Sigmoid colon (tissue), 7 donors: ENCODE measurements at regions of chr4 and their contacts with region 1.

Region 1: GRCh38 chr4:127965062-127965802 is at the starts of genes ABHD18 and MFSD8:
- DNase-seq: peak; percentile 100
- H3K4me3 ChIP-seq: peak within 1 kb of the TSS; percentile 77 to 96 (median 82)
- H3K27ac ChIP-seq: peak within 1 kb of the TSS; percentile 91 to 96 (median 95)
- H3K4me1 ChIP-seq: peaks cover 0 to 23% (median 17%) of the 10 kb centered on the region in 4 donors
- H3K27me3 ChIP-seq: no peaks in the 10 kb centered on the region
- CTCF ChIP-seq: peak; percentile 37 to 63 (median 44)
- EP300 ChIP-seq: peak in 1 of 4 donors; percentile 89
- POLR2A ChIP-seq: peak; percentile 46 to 54
- total RNA-seq, gene ABHD18: 6.7 to 15.2 (median 9.0) TPM
- total RNA-seq, gene MFSD8: 26.3 to 54.2 (median 41.8) TPM

Region 2: DNA sequence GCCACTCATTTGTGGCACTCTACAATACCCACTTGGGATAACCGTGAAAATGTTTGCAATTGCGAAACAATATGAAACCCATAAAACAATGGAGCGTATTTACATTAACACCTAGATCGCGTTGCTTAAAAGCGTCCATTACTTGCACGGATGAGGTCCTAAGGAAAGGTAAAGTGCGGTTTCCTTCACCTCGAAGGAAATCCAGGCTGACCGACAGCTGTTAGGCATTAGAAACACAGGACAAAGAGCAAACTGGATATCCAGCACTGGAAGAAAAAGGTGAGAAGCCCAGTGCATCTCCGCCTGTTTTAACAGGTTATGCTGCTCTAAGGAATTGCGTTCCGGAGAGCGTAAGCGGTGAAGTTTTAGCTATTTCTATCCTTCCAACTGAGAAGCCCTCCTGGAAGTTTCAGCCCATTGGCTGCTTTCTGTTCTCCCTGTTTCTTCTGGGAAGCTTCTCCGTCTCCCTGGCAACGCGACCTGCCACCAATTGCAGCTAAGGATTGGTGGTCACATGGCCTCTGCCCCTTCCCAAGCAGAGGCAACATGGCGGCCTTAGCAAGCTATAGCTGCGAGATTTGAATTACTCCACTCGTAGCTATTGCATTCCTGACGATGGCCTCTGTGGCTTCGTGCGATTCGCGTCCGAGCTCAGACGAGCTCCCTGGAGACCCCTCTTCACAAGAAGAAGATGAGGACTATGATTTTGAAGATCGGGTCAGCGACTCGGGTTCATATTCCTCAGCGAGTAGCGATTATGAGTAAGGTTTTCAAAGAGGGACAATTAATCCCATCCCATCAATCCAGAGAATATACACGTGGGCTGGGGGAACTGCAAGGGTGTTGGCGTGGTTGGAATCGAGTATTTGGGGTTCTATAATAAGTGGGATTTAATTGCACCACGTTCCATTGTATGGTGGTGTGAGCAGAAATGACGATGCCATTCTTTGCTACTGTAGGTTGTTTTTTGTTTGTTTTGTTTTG is 332.5 kb before region 1 on chr4 and contains the start of gene INTU:
- intact Hi-C with region 1: loop called (anchors 10 kb)
- DNase-seq: peak; percentile 97
- H3K4me3 ChIP-seq: peak within 1 kb of the TSS; percentile 52 to 68 (median 66)
- H3K27ac ChIP-seq: peak within 1 kb of the TSS; percentile 58 to 74 (median 72)
- H3K4me1 ChIP-seq: peaks cover 0 to 16% (median 8%) of the 10 kb centered on the region in 4 donors
- H3K27me3 ChIP-seq: peaks cover 0 to 4% (median 0%) of the 10 kb centered on the region in 3 donors
- CTCF ChIP-seq: no peak
- EP300 ChIP-seq: no peak
- POLR2A ChIP-seq: no peak
- total RNA-seq, gene INTU: 7.6 to 10.0 (median 9.5) TPM

Region 3: DNA sequence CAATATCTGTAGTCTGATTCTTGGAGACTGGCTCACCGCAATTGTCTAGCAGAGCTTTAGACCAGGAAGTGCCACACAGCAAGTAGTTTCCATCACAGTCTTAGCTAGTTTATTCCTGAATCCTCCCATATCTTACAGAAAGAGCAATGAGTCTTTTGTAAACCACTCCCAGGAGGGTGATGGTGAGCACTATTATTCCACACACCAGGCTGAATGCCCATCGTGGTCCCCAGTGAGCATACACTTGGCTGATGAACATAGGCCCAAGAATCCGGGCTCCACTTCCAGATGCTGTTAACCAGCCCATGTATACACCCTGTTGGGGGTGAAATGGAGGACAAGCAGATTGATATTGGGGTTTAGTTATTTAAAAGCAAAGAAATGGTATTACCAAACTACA is 44.7 kb before region 1 on chr4:
- intact Hi-C with region 1: no loop called
- DNase-seq: no peak
- H3K4me3 ChIP-seq: no peak overlapping the region
- H3K27ac ChIP-seq: no peak overlapping the region
- H3K4me1 ChIP-seq: no peaks in the 10 kb centered on the region
- H3K27me3 ChIP-seq: no peaks in the 10 kb centered on the region
- CTCF ChIP-seq: no peak
- EP300 ChIP-seq: no peak
- POLR2A ChIP-seq: no peak

Region 4: DNA sequence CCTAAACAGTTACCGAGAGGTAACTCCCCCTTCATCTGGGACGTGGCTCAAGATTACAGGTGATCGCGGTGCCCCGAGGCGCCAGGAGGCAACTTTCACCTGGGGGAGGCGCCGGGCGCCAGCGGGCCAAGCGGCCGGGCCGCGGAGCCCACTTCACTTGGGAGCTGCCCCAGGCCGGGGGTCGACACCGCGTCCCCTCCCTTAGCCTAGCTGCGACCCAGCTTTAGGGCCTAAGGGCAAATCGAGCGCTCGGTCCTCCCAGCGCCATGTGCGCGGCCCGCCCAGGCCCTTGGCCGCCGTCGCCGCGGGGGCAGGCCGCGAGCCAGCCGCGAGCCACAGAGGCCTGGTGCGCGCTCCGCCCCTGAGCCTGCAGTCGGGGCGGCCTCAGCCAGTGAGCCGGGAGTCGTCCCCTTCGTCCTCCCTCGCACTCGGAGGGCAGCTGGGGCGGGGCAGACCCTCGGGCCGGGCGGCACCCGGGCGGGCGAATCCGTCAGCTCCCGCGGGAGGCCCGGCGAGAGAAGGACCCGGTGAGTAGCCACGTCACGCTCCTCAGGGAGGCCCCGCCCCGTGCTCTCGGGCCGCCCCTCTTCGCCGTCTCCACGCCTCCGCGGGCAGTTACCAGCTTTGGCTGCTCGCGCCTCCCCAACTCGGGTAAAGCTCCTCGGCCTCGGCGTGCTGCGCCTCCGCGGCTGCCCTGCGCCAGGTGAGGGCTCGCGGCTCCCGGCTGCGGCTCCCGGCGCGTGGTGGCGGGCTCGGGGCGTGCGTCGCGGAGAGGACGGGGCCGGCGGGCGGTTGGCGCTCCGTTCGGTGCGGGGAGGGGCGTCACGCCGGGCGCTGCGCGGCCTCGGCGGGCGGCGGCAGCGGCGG is 95.7 kb after region 1 on chr4 and contains the start of gene LARP1B:
- intact Hi-C with region 1: loop called (anchors 1 kb)
- DNase-seq: peak; percentile 97
- H3K4me3 ChIP-seq: peak within 1 kb of the TSS; percentile 86 to 92 (median 88)
- H3K27ac ChIP-seq: peak within 1 kb of the TSS; percentile 98
- H3K4me1 ChIP-seq: peaks cover 0 to 28% (median 17%) of the 10 kb centered on the region in 4 donors
- H3K27me3 ChIP-seq: no peaks in the 10 kb centered on the region
- CTCF ChIP-seq: no peak
- EP300 ChIP-seq: no peak
- POLR2A ChIP-seq: peak; percentile 50 to 75
- total RNA-seq, gene LARP1B: 18.2 to 30.3 (median 20.3) TPM

Region 5: DNA sequence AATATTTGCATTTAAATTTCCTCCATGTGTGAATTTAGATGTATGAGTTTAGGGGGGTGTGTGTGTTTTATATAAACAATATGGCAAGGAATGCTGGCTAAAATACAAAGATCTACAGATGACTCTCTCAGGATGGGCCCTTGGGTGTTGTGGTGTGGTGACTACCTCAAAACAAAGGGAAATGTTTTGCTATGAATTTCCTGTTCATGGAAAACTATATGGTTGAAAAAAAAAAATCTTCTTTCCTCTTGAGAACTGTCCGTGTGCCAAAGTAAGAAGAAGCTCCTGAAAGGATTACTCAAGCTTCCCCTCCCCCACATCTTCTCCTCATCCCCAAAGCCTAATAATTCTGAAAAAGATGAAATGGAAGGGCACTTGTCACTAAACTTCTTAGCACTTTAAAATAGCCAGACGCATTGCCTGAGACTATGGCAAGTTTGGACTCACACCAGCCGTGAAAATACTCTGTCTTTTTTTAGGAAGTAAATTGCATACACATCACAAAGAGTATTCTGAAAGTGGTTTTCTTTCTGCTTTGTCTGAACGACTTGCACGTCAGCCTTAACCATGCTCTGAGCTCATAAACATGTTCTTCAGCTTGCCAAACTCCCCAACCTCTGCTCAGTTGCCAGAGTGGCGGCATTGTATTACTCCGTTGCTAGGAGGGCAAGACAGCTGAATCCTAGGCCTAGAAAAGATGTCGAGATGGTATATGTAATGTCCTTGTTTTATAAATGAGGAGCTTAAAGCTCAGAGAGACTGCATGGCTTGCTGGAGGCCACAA is 593.9 kb after region 1 on chr4:
- intact Hi-C with region 1: loop called (anchors 10 kb)
- DNase-seq: peak; percentile 87
- H3K4me3 ChIP-seq: no peak overlapping the region
- H3K27ac ChIP-seq: peak overlapping the region; percentile 67 to 77 (median 72)
- H3K4me1 ChIP-seq: peaks cover 0 to 23% (median 15%) of the 10 kb centered on the region in 4 donors
- H3K27me3 ChIP-seq: no peaks in the 10 kb centered on the region
- CTCF ChIP-seq: no peak
- EP300 ChIP-seq: peak in 2 of 4 donors; percentile 18 to 58
- POLR2A ChIP-seq: no peak